ENCODE measurements at regions of chr2 and their contacts with region 1.

Region 1: DNA sequence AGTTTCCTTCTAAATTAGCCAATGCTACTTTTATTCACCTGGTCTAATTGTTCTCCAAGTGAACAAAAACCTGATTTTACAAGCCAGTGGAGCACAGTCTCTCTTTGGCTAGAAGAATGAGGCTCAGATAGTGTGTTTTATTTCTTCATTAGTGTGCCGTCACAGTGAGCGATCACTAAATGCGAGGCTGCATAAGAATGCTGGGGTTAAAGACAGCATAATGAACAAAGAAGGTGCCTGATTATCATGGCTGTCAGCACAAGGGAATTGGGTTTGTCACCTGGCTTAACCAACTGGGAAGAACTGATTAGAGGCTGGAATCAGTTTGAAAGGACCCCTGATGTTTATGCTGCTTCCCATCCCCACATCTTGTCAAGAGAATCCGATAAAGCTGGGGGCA is 76.4 kb downstream of the EPHA4 start:
- DNase-seq: no peak
- H3K4me3 ChIP-seq: no peak overlapping the region
- H3K4me3 Mint-ChIP-seq: no peak overlapping the region
- H3K27ac Mint-ChIP-seq: peak overlapping the region; percentile 71
- H3K4me1 ChIP-seq: peaks cover 39% of the 10 kb centered on the region
- H3K4me1 Mint-ChIP-seq: peaks cover 39% of the 10 kb centered on the region
- H3K27me3 ChIP-seq: no peaks in the 10 kb centered on the region
- H3K27me3 Mint-ChIP-seq: no peaks in the 10 kb centered on the region
- CTCF ChIP-seq: no peak

Region 2: DNA sequence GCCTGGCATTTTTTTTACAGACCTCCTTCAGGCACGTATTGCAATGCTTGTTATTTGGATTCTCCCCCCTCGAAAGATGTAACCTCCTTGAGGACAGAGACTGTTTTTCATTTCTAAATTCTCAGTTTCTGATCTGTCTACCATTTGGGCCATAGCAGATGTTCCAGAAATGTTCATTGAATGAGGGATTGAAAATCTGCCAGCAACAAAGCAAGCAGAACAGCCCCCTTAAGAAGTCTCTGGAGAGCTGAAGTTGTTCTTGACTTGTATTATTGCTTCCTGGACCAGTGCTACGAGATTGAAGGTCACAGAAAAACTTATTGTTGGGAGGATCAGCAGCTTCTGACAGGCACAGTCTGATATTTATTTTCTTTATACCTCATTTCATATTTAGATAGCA is 279.1 kb before region 1 on chr2:
- CTCF ChIA-PET with region 1: no interaction called
- POLR2A ChIA-PET with region 1: no interaction called
- intact Hi-C with region 1: no loop called
- DNase-seq: no peak
- H3K4me3 ChIP-seq: no peak overlapping the region
- H3K4me3 Mint-ChIP-seq: no peak overlapping the region
- H3K27ac Mint-ChIP-seq: no peak overlapping the region
- H3K4me1 ChIP-seq: no peaks in the 10 kb centered on the region
- H3K4me1 Mint-ChIP-seq: no peaks in the 10 kb centered on the region
- H3K27me3 ChIP-seq: no peaks in the 10 kb centered on the region
- H3K27me3 Mint-ChIP-seq: no peaks in the 10 kb centered on the region
- CTCF ChIP-seq: no peak

Region 3: GRCh38 chr2:221467610-221468009 is 28.1 kb before region 1 on chr2:
- CTCF ChIA-PET with region 1: no interaction called
- POLR2A ChIA-PET with region 1: interaction called, 15 read pairs
- intact Hi-C with region 1: no loop called
- DNase-seq: no peak
- H3K4me3 ChIP-seq: no peak overlapping the region
- H3K4me3 Mint-ChIP-seq: no peak overlapping the region
- H3K27ac Mint-ChIP-seq: no peak overlapping the region
- H3K4me1 ChIP-seq: no peaks in the 10 kb centered on the region; the same call in 1 of the 2 replicates
- H3K4me1 Mint-ChIP-seq: no peaks in the 10 kb centered on the region
- H3K27me3 ChIP-seq: no peaks in the 10 kb centered on the region
- H3K27me3 Mint-ChIP-seq: no peaks in the 10 kb centered on the region
- CTCF ChIP-seq: no peak

Measured in Caco-2 (cell line).